WTC11 (cell line): ENCODE measurements at regions of chr12 and their contacts with region 1.

Region 1: DNA sequence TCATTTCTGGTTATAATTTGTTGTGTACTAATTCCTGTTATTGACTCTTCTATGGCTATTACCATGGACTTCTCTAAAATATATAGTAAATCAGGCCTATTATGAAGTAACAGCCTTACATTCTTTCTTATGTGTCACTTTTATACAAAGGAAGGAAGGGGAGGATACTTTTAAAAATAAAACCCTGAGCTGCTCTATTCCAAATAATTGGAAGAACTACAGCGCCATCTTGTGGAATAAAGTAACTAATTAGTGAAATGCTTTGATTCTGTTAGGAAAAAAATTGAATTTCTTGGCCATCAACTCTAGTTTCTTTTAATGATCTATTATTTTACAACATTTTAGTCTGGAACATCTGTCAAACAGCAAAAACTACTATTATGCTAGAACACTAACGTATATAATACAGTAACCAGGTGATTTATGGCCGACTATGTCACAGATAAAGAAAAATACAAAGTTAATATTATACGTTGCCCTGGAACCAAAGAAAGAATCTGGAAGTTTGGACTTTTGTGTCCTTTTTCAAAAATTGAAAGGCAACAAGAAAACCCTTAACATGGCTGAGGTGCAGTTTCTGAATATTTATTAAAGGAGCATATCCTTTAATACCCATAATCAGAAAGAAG is 55.0 kb upstream of the NELL2 start:
- DNase-seq: no peak
- ATAC-seq: peak; percentile 60
- H3K4me3 Mint-ChIP-seq: no peak overlapping the region
- H3K27ac Mint-ChIP-seq: no peak overlapping the region
- H3K4me1 Mint-ChIP-seq: no peaks in the 10 kb centered on the region
- H3K27me3 Mint-ChIP-seq: peaks cover 3% of the 10 kb centered on the region; the same call in 1 of the 2 replicates
- CTCF ChIP-seq: peak; percentile 43; the same call in 1 of the 2 replicates

Region 2: DNA sequence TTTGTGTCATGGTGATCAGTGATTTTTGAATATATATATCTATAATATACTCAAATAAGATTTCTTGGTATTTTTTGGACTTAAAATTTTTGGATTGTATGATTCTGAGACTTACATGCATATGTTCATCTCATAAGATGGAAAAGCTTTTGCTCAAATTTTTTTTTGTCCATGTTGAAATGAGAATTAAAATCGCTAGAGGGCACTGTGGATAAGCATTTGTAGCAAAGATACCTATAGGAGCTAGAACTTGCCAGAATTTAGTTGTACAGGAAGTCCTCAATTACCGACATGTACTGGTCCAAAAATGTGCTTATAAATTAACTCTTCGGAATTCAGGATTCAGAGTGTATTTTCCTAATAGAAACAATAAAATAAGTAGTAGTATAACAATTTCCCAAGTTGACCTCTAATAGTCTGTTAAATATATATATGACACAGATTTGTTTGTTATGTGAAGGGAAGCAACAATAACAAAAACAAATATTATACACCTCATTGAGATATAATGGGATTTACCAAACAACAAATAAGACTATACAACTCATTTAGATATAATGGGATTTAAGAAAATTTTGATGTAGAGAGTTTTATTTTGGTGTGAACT is 915.6 kb before region 1 on chr12:
- CTCF ChIA-PET with region 1: interaction called, 15 read pairs
- POLR2A ChIA-PET with region 1: no interaction called
- DNase-seq: no peak
- ATAC-seq: peak; percentile 55; the same call in 1 of the 2 replicates
- H3K4me3 Mint-ChIP-seq: no peak overlapping the region
- H3K27ac Mint-ChIP-seq: no peak overlapping the region
- H3K4me1 Mint-ChIP-seq: peaks cover 16% of the 10 kb centered on the region
- H3K27me3 Mint-ChIP-seq: no peaks in the 10 kb centered on the region
- CTCF ChIP-seq: peak; percentile 57

Region 3: GRCh38 chr12:44875954-44876553 is 55.0 kb before region 1 on chr12 and contains the start of gene NELL2:
- CTCF ChIA-PET with region 1: interaction called, 15 read pairs
- POLR2A ChIA-PET with region 1: no interaction called
- DNase-seq: peak; percentile 84
- ATAC-seq: peak; percentile 83
- H3K4me3 Mint-ChIP-seq: peak within 1 kb of the TSS; percentile 99
- H3K27ac Mint-ChIP-seq: peak within 1 kb of the TSS; percentile 87
- H3K4me1 Mint-ChIP-seq: peaks cover 20% of the 10 kb centered on the region
- H3K27me3 Mint-ChIP-seq: peaks cover 14% of the 10 kb centered on the region; the same call in 1 of the 2 replicates
- CTCF ChIP-seq: no peak
- total RNA-seq, gene NELL2: 37.4 to 49.9 TPM (median 45.8 TPM) in 3 replicates